Naive thymus-derived CD4-positive, alpha-beta T cell (primary cell): ENCODE measurements at regions of chr4 and their contacts with region 1.

Region 1: GRCh38 chr4:54233277-54233696 is 4.2 kb downstream of the PDGFRA start:
- DNase-seq: peak; percentile 37 to 82 (median 65)
- ATAC-seq: peak; percentile 88
- H3K4me3 ChIP-seq: peak overlapping the region; percentile 50
- H3K4me3 Mint-ChIP-seq: peak overlapping the region; percentile 52 to 87 (median 84)
- H3K27ac ChIP-seq: no peak overlapping the region
- H3K27ac Mint-ChIP-seq: no peak overlapping the region
- H3K4me1 ChIP-seq: peaks cover 0 to 7% of the 10 kb centered on the region in 2 donors
- H3K4me1 Mint-ChIP-seq: peaks cover 11 to 32% (median 21%) of the 10 kb centered on the region in 7 donors
- H3K27me3 ChIP-seq: peaks cover 0 to 4% of the 10 kb centered on the region in 2 donors
- H3K27me3 Mint-ChIP-seq: peaks cover 27 to 70% (median 63%) of the 10 kb centered on the region in 5 donors

Region 2: GRCh38 chr4:52983563-52984303 is 1249.6 kb before region 1 on chr4:
- CTCF ChIA-PET with region 1: interaction called, 4 read pairs
- POLR2A ChIA-PET with region 1: no interaction called
- intact Hi-C with region 1: loop called (anchors 10 kb)
- DNase-seq: peak in 6 of 9 donors; percentile 14 to 50 (median 40)
- ATAC-seq: peak; percentile 50
- H3K4me3 ChIP-seq: no peak overlapping the region
- H3K4me3 Mint-ChIP-seq: peak overlapping the region in 1 of 10 donors; percentile 9
- H3K27ac ChIP-seq: no peak overlapping the region
- H3K27ac Mint-ChIP-seq: no peak overlapping the region
- H3K4me1 ChIP-seq: no peaks in the 10 kb centered on the region
- H3K4me1 Mint-ChIP-seq: peaks cover 0 to 11% (median 3%) of the 10 kb centered on the region in 7 donors
- H3K27me3 ChIP-seq: no peaks in the 10 kb centered on the region
- H3K27me3 Mint-ChIP-seq: no peaks in the 10 kb centered on the region

Region 3: DNA sequence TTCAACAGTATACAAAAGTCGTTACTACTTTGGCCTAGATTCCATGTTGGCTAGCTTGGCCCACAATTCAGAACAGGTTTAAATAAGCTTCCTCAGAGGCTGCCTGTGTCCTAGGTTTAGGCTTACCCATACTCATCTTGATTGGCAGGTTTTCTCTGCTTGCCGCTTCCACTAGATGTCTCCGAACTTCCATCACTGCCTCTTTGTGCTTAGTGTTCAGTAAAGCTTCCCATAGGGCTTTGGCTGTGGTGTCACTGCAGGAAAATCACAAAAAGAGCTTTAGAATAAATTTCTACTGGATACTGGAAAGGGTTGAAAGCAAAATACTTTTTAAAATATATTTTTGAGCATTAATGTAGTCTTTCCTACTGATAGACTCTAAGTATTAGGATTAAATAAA is 919.8 kb before region 1 on chr4:
- CTCF ChIA-PET with region 1: no interaction called
- POLR2A ChIA-PET with region 1: no interaction called
- intact Hi-C with region 1: loop called in 1 of 2 experiments (anchors 10 kb)
- DNase-seq: no peak
- ATAC-seq: no peak
- H3K4me3 ChIP-seq: no peak overlapping the region
- H3K4me3 Mint-ChIP-seq: no peak overlapping the region
- H3K27ac ChIP-seq: no peak overlapping the region
- H3K27ac Mint-ChIP-seq: no peak overlapping the region
- H3K4me1 ChIP-seq: no peaks in the 10 kb centered on the region
- H3K4me1 Mint-ChIP-seq: peaks cover 9 to 35% (median 27%) of the 10 kb centered on the region in 7 donors
- H3K27me3 ChIP-seq: no peaks in the 10 kb centered on the region
- H3K27me3 Mint-ChIP-seq: no peaks in the 10 kb centered on the region

Region 4: GRCh38 chr4:53490965-53491622 is 742.2 kb before region 1 on chr4:
- CTCF ChIA-PET with region 1: no interaction called
- POLR2A ChIA-PET with region 1: no interaction called
- intact Hi-C with region 1: loop called (anchors 1 to 2 kb)
- DNase-seq: no peak
- ATAC-seq: no peak
- H3K4me3 ChIP-seq: no peak overlapping the region
- H3K4me3 Mint-ChIP-seq: no peak overlapping the region
- H3K27ac ChIP-seq: no peak overlapping the region
- H3K27ac Mint-ChIP-seq: no peak overlapping the region
- H3K4me1 ChIP-seq: no peaks in the 10 kb centered on the region
- H3K4me1 Mint-ChIP-seq: no peaks in the 10 kb centered on the region
- H3K27me3 ChIP-seq: no peaks in the 10 kb centered on the region
- H3K27me3 Mint-ChIP-seq: peaks cover 14 to 25% (median 22%) of the 10 kb centered on the region in 5 donors

Region 5: GRCh38 chr4:53929955-53930798 is 303.1 kb before region 1 on chr4:
- CTCF ChIA-PET with region 1: interaction called, 57 read pairs
- POLR2A ChIA-PET with region 1: no interaction called
- intact Hi-C with region 1: loop called (anchors 1 kb)
- DNase-seq: peak in 8 of 9 donors; percentile 24 to 56 (median 49)
- ATAC-seq: peak; percentile 80
- H3K4me3 ChIP-seq: no peak overlapping the region
- H3K4me3 Mint-ChIP-seq: no peak overlapping the region
- H3K27ac ChIP-seq: no peak overlapping the region
- H3K27ac Mint-ChIP-seq: no peak overlapping the region
- H3K4me1 ChIP-seq: no peaks in the 10 kb centered on the region
- H3K4me1 Mint-ChIP-seq: no peaks in the 10 kb centered on the region
- H3K27me3 ChIP-seq: no peaks in the 10 kb centered on the region
- H3K27me3 Mint-ChIP-seq: peaks cover 2 to 12% (median 11%) of the 10 kb centered on the region in 5 donors